OCI-LY7 (cell line): ENCODE measurements at regions of chr2 and their contacts with region 1.

Region 1: GRCh38 chr2:85826990-85827878 is 61.6 kb downstream of the ST3GAL5 start:
- DNase-seq: peak; percentile 76
- H3K4me3 ChIP-seq: no peak overlapping the region
- H3K27ac ChIP-seq: no peak overlapping the region
- H3K4me1 ChIP-seq: no peaks in the 10 kb centered on the region
- CTCF ChIP-seq: peak; percentile 86

Region 2: GRCh38 chr2:85888684-85889626 is 61.7 kb after region 1 on chr2 and contains the start of gene ST3GAL5:
- CTCF ChIA-PET with region 1: no interaction called
- POLR2A ChIA-PET with region 1: interaction called, 3 read pairs
- intact Hi-C with region 1: loop called (anchors 1 kb)
- DNase-seq: peak; percentile 93
- H3K4me3 ChIP-seq: peak within 1 kb of the TSS; percentile 87
- H3K27ac ChIP-seq: peak within 1 kb of the TSS; percentile 14
- H3K4me1 ChIP-seq: peaks cover 22% of the 10 kb centered on the region
- CTCF ChIP-seq: peak; percentile 92
- total RNA-seq, gene ST3GAL5: 6.1 and 7.4 TPM in 2 replicates